ENCODE measurements at regions of chr14 and their contacts with region 1.

Region 1: DNA sequence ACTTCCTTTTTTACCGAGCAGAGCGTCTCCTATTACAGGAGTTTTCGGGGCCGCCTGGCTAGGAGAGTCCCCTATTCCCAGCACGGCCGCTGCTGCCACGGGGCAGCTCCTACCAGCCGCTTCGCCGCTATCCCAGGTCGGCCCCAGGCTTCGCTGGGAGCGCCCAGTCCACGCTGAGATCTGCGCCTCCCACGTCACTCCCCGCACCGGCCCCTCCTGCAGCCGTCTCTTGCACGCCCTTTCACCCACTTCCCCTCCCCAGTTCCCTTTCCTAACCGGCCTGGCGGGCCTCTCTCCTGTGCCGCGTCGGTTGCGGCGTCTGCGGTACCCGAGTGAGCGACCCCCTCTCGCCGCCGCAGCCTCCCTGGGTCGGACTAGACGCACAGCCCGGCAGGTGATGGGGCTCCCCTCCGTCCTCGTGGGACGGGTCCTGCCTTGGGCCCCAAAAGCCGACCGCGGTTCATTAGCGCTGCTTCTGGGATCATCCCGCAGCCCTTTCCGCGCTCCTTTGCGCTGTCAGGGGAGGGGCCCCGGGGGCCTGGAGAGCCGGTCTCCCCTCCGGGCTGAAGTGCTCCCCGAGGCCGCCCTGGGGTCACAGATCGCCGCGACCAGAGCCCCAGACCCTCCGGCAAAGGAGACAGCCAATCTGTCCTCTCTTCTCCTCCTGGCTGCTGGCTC is 1318.4 kb downstream of the TMEM121 start:
- DNase-seq: peak; percentile 50 to 79 (median 71)
- H3K4me3 ChIP-seq: peak overlapping the region; percentile 91
- H3K4me3 Mint-ChIP-seq: peak overlapping the region; percentile 94 to 98 (median 97)
- H3K27ac ChIP-seq: peak overlapping the region; percentile 60
- H3K27ac Mint-ChIP-seq: peak overlapping the region; percentile 81 to 97 (median 94)
- H3K4me1 ChIP-seq: peaks cover 8% of the 10 kb centered on the region
- H3K4me1 Mint-ChIP-seq: peaks cover 24 to 36% (median 32%) of the 10 kb centered on the region in 3 donors
- H3K27me3 ChIP-seq: no peaks in the 10 kb centered on the region
- H3K27me3 Mint-ChIP-seq: peaks cover 4 to 5% of the 10 kb centered on the region in 2 donors

Region 2: GRCh38 chr14:106872611-106873446 is 28.1 kb after region 1 on chr14:
- CTCF ChIA-PET with region 1: interaction called, 24 read pairs
- POLR2A ChIA-PET with region 1: no interaction called
- DNase-seq: peak; percentile 62 to 82 (median 70)
- H3K4me3 ChIP-seq: peak overlapping the region; percentile 42
- H3K4me3 Mint-ChIP-seq: peak overlapping the region; percentile 20 to 59 (median 40)
- H3K27ac ChIP-seq: no peak overlapping the region
- H3K27ac Mint-ChIP-seq: peak overlapping the region in 2 of 8 donors; percentile 15 to 60
- H3K4me1 ChIP-seq: peaks cover 8% of the 10 kb centered on the region
- H3K4me1 Mint-ChIP-seq: peaks cover 7 to 12% (median 11%) of the 10 kb centered on the region in 3 donors
- H3K27me3 ChIP-seq: peaks cover 4% of the 10 kb centered on the region
- H3K27me3 Mint-ChIP-seq: peaks cover 22 to 65% of the 10 kb centered on the region in 2 donors

Measured in CD8-positive, alpha-beta memory T cell (primary cell).